ENCODE measurements at regions of chr4 and their contacts with region 1.

Region 1: DNA sequence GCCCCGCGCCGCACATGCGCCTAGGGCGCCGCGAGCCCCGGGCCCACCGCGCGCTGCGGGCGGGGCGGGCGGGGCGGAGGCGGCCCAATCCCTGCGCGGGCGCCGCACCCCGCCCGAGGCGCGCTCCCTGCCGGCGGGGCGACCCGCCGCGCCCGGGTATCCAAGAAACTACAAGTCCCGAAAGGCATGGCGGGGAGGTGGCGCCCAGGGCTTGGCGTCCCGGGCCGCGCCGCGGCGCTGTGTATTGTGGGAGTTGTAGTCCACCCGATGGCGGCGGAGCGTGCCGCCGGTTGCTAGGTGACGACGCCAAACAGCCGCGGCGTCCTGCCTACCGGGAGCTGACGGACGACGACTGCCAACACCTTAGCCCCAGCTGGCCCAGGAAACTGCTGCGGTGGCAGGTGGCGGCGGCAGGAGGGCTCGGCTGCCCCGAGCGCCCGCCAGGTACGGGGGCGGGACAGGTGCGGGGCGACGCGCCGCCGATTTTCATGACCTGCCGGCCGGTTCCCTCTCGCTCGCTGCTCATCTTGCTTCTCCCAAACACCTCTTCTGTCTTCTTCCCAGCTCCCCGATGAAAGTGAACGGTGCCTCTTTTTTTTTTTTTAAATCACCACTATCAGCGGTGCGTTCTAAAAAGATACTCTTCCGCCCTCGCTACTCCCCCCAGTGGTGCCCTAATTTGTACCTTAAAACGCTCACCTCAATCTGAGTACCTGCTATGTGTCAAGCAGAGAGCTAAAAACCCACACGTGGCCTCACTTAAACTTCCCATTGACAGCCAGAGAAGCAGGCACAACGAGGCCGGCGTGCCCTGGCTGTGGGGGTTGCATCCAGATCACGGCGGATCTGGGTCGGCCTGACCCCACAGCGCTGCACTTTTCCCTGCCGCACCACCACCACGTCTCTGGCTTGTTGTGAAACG is at the start of gene CFAP99:
- DNase-seq: peak; percentile 98
- H3K4me3 ChIP-seq: peak within 1 kb of the TSS in 2 of 3 donors; percentile 34 to 43
- H3K27ac ChIP-seq: no peak within 1 kb of the TSS
- H3K4me1 ChIP-seq: peaks cover 8 to 30% of the 10 kb centered on the region in 2 donors
- H3K27me3 ChIP-seq: no peaks in the 10 kb centered on the region
- CTCF ChIP-seq: peak in 3 of 6 experiments; percentile 2 to 34 (median 20)
- POLR2A ChIP-seq: peak in 1 of 2 donors; percentile 36
- total RNA-seq, gene CFAP99: 0.27 to 1.9 (median 1.1) TPM in 3 of 4 donors, not detected in the other

Region 2: DNA sequence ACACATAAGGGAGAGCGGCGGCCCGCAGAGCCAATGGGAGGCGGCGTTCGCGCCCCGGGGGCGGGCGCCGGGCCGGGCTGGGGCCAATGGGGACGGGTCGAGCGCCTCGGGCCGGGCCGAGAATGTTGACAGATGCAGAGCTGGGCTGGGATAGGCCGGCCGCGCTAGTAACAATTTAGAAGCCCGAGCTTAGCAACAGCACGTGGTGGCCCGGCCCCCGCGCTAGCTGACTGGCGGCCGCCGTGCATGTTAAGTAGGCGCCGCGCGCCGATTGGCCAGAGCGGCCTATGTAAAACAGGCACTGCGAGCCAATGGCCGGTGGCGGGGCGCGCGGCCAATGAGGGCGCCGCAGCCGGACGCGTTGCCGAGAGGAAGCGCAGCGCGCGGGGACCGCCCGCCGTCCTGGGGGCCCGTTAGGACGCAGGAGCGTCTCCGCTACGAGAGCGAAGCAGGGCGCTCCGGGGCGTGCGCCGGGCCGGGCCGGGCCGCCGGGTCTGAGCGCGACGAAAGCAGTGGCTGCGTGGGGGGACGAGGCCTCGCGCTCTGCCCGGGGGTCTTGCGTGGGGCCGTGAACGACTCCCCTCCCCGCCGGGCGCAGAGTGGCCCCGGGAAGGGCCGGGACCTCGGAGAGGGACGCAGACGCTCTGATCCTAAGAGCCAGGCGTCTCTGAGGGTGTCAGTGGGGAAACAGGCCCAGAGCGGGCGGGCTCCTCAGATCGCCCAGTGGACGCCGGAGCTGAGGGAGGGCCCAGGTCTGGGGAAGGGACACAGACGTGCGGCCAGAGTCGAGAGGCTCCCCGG is 156.6 kb before region 1 on chr4:
- intact Hi-C with region 1: loop called (anchors 5 kb)
- DNase-seq: peak; percentile 100
- H3K4me3 ChIP-seq: peak overlapping the region in 2 of 3 donors; percentile 27 to 45
- H3K27ac ChIP-seq: peak overlapping the region; percentile 94 to 96 (median 96)
- H3K4me1 ChIP-seq: peaks cover 61 to 65% of the 10 kb centered on the region in 2 donors
- H3K27me3 ChIP-seq: no peaks in the 10 kb centered on the region
- CTCF ChIP-seq: no peak
- POLR2A ChIP-seq: peak; percentile 80 to 98

Region 3: DNA sequence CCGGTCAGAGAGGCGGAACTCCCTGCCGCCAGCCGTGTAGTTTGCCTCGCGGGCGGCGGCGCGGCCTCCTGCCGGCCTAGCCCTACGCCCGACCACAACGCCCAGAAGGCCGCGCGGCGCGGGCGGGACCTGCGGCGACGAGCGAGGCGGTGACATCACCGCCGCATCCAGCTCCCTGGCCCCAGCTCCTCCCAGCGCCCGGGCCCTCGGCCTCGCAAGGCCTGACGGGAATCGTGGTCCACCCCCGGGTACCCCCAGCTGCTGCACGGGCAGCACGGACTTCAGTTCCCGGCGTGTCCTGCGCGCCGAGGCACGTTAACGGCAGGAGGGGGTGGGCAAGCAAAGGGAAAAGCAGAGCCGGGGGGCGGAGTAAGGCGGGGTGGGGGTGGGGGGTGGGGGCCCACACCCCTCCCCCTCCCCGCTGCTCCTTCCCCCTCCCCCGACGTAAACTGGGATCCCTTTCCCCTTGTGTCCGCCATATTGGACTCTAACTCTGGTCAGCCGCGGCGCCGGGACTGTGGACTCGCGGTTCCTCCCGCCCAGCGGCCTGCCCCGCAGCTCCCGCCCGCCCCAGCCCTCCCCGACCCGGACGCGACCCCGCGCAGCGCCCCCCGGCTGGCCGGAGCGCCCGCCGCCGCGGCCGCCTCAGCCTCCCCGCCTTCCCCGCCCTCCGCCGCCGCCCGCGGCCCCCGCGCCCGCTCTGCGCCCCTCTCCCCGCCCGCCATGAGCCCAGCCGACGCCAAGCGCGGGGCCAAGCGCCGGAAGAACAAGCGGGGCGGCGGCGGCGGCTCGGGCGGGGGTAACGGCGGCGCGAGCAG is 117.5 kb after region 1 on chr4 and contains the start of gene FAM193A:
- intact Hi-C with region 1: loop called (anchors 5 kb)
- DNase-seq: peak; percentile 99 to 100
- H3K4me3 ChIP-seq: peak within 1 kb of the TSS; percentile 78 to 96 (median 90)
- H3K27ac ChIP-seq: peak within 1 kb of the TSS; percentile 77 to 90 (median 90)
- H3K4me1 ChIP-seq: peaks cover 18 to 22% of the 10 kb centered on the region in 2 donors
- H3K27me3 ChIP-seq: no peaks in the 10 kb centered on the region
- CTCF ChIP-seq: no peak
- POLR2A ChIP-seq: peak in 1 of 2 donors; percentile 74
- total RNA-seq, gene FAM193A: 22.4 to 36.7 (median 30.3) TPM

Region 4: DNA sequence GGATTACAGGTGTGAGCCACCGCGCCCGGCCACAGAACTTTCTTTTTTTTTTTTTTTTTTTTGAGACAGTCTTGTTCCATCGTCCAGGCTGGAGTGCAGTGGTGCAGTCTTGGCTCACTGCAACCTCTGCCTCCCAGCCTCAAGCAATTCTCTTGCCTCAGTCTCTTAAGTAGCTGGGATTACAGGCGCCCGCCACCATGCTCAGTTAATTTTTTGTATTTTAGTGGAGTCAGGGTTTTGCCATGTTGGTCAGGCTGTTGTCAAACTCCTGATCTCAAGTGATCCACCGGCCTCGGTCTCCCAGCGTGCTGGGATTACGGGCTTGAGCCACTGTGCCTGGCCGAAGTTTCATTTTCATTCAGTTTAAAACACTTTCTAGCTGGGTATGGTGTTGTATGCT is 133.9 kb after region 1 on chr4:
- intact Hi-C with region 1: no loop called
- DNase-seq: no peak
- H3K4me3 ChIP-seq: no peak overlapping the region
- H3K27ac ChIP-seq: no peak overlapping the region
- H3K4me1 ChIP-seq: peaks cover 0 to 3% of the 10 kb centered on the region in 2 donors
- H3K27me3 ChIP-seq: no peaks in the 10 kb centered on the region
- CTCF ChIP-seq: no peak
- POLR2A ChIP-seq: no peak